Ovary (tissue), 10 donors: ENCODE measurements at regions of chr9 and their contacts with region 1.

Region 1: GRCh38 chr9:130940693-130941576 is 1.9 kb upstream of the FIBCD1 start:
- DNase-seq: peak; percentile 59 to 83 (median 74)
- H3K4me3 ChIP-seq: no peak overlapping the region
- H3K27ac ChIP-seq: no peak overlapping the region
- H3K4me1 ChIP-seq: peaks cover 6% of the 10 kb centered on the region
- H3K27me3 ChIP-seq: peaks cover 12% of the 10 kb centered on the region
- CTCF ChIP-seq: peak; percentile 76 to 90 (median 87)
- EP300 ChIP-seq: no peak
- POLR2A ChIP-seq: no peak

Region 2: GRCh38 chr9:130290291-130291181 is 650.4 kb before region 1 on chr9:
- intact Hi-C with region 1: no loop called
- DNase-seq: peak in 2 of 5 donors; percentile 39 to 45
- H3K4me3 ChIP-seq: no peak overlapping the region
- H3K27ac ChIP-seq: no peak overlapping the region
- H3K4me1 ChIP-seq: no peaks in the 10 kb centered on the region
- H3K27me3 ChIP-seq: no peaks in the 10 kb centered on the region
- CTCF ChIP-seq: no peak
- EP300 ChIP-seq: no peak
- POLR2A ChIP-seq: no peak

Region 3: GRCh38 chr9:130414910-130415746 is 525.8 kb before region 1 on chr9:
- intact Hi-C with region 1: loop called in 1 of 4 experiments (anchors 5 kb)
- DNase-seq: no peak
- H3K4me3 ChIP-seq: no peak overlapping the region
- H3K27ac ChIP-seq: no peak overlapping the region
- H3K4me1 ChIP-seq: no peaks in the 10 kb centered on the region
- H3K27me3 ChIP-seq: no peaks in the 10 kb centered on the region
- CTCF ChIP-seq: no peak
- EP300 ChIP-seq: no peak
- POLR2A ChIP-seq: no peak

Region 4: GRCh38 chr9:130701056-130702022 is 239.6 kb before region 1 on chr9:
- intact Hi-C with region 1: loop called (anchors 2 to 5 kb)
- DNase-seq: peak; percentile 58 to 81 (median 75)
- H3K4me3 ChIP-seq: no peak overlapping the region
- H3K27ac ChIP-seq: no peak overlapping the region
- H3K4me1 ChIP-seq: no peaks in the 10 kb centered on the region
- H3K27me3 ChIP-seq: no peaks in the 10 kb centered on the region
- CTCF ChIP-seq: peak; percentile 69 to 77 (median 72)
- EP300 ChIP-seq: no peak
- POLR2A ChIP-seq: no peak

Region 5: DNA sequence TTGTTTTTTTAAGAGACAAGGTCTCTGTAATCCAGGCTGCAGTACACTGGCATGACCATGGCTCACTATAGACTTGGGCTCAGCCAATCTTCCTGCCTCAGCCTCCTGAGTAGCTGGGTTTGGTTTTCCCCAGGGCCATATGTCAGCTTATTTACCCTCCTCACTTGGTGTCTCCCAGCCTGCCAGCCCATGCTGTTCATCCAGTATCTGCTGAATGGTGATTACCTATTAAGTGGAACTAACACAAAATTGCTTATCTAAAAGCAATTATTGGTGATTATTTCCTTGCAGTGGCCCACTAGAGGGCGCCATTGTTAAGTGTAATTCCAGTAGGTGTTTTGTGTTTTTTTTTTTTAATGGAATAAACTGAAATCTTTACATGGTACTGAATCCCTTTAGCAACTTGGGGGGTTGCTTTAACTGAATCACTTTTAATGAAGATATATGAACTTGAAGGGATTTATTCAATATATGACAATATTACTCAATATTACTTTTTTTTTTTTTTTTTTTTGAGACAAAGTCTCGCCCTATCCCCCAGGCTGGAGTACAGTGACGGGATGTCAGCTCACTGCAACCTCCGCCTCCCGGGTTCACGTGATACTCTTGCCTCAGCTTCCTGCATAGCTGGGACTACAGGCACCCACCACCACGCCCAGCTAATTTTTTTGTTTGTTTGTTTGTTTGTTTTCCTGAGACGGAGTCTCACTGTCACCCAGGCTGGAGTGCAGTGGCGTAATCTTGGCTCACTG is 233.5 kb before region 1 on chr9:
- intact Hi-C with region 1: loop called in 3 of 4 experiments (anchors 5 kb)
- DNase-seq: peak; percentile 44 to 80 (median 61)
- H3K4me3 ChIP-seq: no peak overlapping the region
- H3K27ac ChIP-seq: no peak overlapping the region
- H3K4me1 ChIP-seq: no peaks in the 10 kb centered on the region
- H3K27me3 ChIP-seq: no peaks in the 10 kb centered on the region
- CTCF ChIP-seq: peak; percentile 66 to 80 (median 75)
- EP300 ChIP-seq: no peak
- POLR2A ChIP-seq: no peak

Region 6: GRCh38 chr9:130770679-130771442 is 170.1 kb before region 1 on chr9:
- intact Hi-C with region 1: loop called (anchors 2 to 10 kb)
- DNase-seq: no peak
- H3K4me3 ChIP-seq: no peak overlapping the region
- H3K27ac ChIP-seq: no peak overlapping the region
- H3K4me1 ChIP-seq: peaks cover 1% of the 10 kb centered on the region
- H3K27me3 ChIP-seq: no peaks in the 10 kb centered on the region
- CTCF ChIP-seq: peak; percentile 57 to 88 (median 77)
- EP300 ChIP-seq: no peak
- POLR2A ChIP-seq: no peak

Region 7: GRCh38 chr9:130846487-130847326 is 94.2 kb before region 1 on chr9:
- intact Hi-C with region 1: no loop called
- DNase-seq: peak; percentile 67 to 84 (median 82)
- H3K4me3 ChIP-seq: peak overlapping the region; percentile 28
- H3K27ac ChIP-seq: peak overlapping the region; percentile 59 to 95
- H3K4me1 ChIP-seq: peaks cover 26% of the 10 kb centered on the region
- H3K27me3 ChIP-seq: no peaks in the 10 kb centered on the region
- CTCF ChIP-seq: no peak
- EP300 ChIP-seq: peak; percentile 5
- POLR2A ChIP-seq: no peak

Region 8: DNA sequence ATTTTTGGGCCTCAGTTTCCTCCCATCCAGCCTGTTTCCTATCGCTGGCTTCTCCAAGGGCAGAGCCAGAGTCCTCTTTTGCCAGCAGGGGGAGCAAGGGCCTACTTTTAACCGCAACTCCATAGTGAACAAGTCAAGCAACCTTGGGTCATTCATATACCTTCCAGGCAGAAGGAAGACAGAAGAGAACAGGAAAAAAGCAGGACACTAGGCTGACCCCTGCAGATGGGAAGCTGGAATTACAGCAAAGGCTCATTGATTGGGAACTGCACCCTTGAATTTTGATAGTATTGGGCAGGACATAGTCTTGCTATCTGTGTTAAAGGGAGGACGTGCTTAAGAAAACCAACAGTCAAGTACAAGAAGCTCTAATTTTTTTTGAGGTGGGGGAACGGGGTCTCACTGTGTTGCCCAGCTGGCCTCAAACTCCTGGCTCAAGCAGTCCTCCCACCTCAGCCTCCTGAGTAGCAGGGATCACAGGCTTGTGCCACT is 74.4 kb before region 1 on chr9:
- intact Hi-C with region 1: loop called (anchors 5 to 10 kb)
- DNase-seq: peak in 4 of 5 donors; percentile 62 to 72 (median 66)
- H3K4me3 ChIP-seq: no peak overlapping the region
- H3K27ac ChIP-seq: no peak overlapping the region
- H3K4me1 ChIP-seq: peaks cover 10% of the 10 kb centered on the region
- H3K27me3 ChIP-seq: no peaks in the 10 kb centered on the region
- CTCF ChIP-seq: peak; percentile 33 to 74 (median 68)
- EP300 ChIP-seq: no peak
- POLR2A ChIP-seq: no peak